ENCODE measurements at regions of chr10 and their contacts with region 1.

Region 1: GRCh38 chr10:73207883-73208282 is 39.2 kb downstream of the DNAJC9 start:
- DNase-seq: no peak
- ATAC-seq: no peak
- H3K4me3 ChIP-seq: no peak overlapping the region
- H3K4me3 Mint-ChIP-seq: no peak overlapping the region
- H3K27ac ChIP-seq: no peak overlapping the region
- H3K27ac Mint-ChIP-seq: no peak overlapping the region
- H3K4me1 ChIP-seq: no peaks in the 10 kb centered on the region
- H3K4me1 Mint-ChIP-seq: no peaks in the 10 kb centered on the region
- H3K27me3 ChIP-seq: no peaks in the 10 kb centered on the region
- H3K27me3 Mint-ChIP-seq: no peaks in the 10 kb centered on the region

Region 2: DNA sequence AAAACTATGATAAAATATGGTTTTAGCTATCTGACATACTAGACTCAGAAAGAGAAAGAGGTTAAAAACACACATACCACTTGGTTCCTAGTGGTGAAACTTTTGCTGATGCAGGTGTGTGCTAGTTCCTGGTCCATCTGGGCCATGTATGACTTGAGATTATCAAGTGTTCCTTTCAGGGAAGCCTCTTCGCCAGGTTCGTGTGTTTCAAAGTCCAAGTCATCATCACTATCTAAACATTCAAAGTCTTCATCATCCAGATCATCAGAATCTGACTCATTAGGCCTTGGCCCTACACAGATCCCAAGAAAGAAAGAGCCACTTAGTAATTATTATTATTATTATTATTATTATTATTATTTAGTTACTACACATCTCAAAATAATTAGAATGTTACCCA is 71.3 kb before region 1 on chr10:
- CTCF ChIA-PET with region 1: no interaction called
- POLR2A ChIA-PET with region 1: no interaction called
- DNase-seq: no peak
- ATAC-seq: no peak
- H3K4me3 ChIP-seq: no peak overlapping the region
- H3K4me3 Mint-ChIP-seq: no peak overlapping the region
- H3K27ac ChIP-seq: no peak overlapping the region
- H3K27ac Mint-ChIP-seq: no peak overlapping the region
- H3K4me1 ChIP-seq: no peaks in the 10 kb centered on the region
- H3K4me1 Mint-ChIP-seq: no peaks in the 10 kb centered on the region
- H3K27me3 ChIP-seq: no peaks in the 10 kb centered on the region
- H3K27me3 Mint-ChIP-seq: no peaks in the 10 kb centered on the region

Region 3: DNA sequence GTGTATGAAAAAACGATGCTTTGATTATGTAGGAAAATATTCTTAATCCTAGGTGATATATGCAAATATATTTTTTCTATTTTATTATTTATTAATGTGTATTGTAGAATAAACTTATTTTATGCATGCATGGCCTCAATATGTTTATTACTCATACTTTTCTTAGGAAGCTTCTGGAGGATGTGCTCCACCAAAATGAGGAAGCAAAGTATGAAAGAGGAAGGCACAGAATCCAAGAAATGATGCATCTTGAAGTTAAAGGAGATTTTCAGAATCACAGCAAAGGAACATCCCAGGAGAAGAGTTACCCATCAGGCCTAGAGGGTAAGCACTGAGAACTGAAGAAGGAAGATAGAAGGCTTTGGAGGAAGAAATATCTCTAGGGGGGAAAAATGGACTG is 79.6 kb after region 1 on chr10:
- CTCF ChIA-PET with region 1: no interaction called
- POLR2A ChIA-PET with region 1: no interaction called
- DNase-seq: no peak
- ATAC-seq: no peak
- H3K4me3 ChIP-seq: no peak overlapping the region
- H3K4me3 Mint-ChIP-seq: no peak overlapping the region
- H3K27ac ChIP-seq: no peak overlapping the region
- H3K27ac Mint-ChIP-seq: no peak overlapping the region
- H3K4me1 ChIP-seq: no peaks in the 10 kb centered on the region
- H3K4me1 Mint-ChIP-seq: no peaks in the 10 kb centered on the region
- H3K27me3 ChIP-seq: no peaks in the 10 kb centered on the region
- H3K27me3 Mint-ChIP-seq: no peaks in the 10 kb centered on the region

Region 4: DNA sequence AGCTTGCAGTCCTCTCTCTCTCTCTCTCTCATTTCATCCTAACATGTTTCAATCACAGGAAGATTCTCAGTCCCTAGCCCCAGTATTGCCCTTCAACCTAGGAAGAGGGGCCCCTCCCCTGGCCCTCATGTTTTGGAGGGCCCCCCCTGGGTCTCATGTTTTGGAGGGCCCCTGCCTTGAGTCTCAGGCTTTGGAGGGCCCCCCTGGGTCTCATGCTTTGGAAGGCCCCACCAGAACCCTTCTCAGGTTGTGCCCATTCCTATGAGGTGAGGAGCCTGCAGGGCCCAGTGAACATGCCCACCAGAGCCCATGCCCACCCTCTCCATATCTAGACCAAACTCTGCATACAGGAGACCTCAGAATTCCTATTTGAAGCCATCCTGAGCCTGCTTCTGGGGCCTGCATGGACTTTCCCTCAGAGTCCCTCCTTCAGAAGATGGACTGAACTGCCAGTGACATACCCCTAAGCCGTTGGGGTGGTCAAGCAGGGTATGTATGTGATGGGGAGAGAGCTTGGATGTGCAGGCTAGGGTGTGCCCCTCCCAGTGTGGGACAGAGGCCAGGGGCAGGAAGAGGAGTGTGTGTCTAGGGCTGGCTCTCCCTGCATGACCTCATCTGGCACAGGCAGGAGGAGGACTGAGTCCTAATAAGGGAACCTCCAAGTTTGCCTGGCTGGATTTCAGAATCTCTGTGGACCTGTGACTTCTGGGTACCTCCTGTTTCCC is 1994.6 kb after region 1 on chr10:
- CTCF ChIA-PET with region 1: interaction called in 1 of 2 experiments, 10 read pairs
- POLR2A ChIA-PET with region 1: no interaction called
- DNase-seq: no peak
- ATAC-seq: no peak
- H3K4me3 ChIP-seq: no peak overlapping the region
- H3K4me3 Mint-ChIP-seq: no peak overlapping the region
- H3K27ac ChIP-seq: no peak overlapping the region
- H3K27ac Mint-ChIP-seq: no peak overlapping the region
- H3K4me1 ChIP-seq: no peaks in the 10 kb centered on the region
- H3K4me1 Mint-ChIP-seq: no peaks in the 10 kb centered on the region
- H3K27me3 ChIP-seq: no peaks in the 10 kb centered on the region
- H3K27me3 Mint-ChIP-seq: no peaks in the 10 kb centered on the region

Measured in T-cell (primary cell).